ENCODE measurements at regions of chr10 and their contacts with region 1.

Region 1: GRCh38 chr10:46284293-46285229 is 2.2 kb upstream of the ANTXRL start:
- DNase-seq: peak; percentile 87
- H3K4me3 ChIP-seq: peak overlapping the region; percentile 86
- H3K27ac ChIP-seq: peak overlapping the region; percentile 71
- H3K4me1 ChIP-seq: peaks cover 24% of the 10 kb centered on the region
- H3K27me3 ChIP-seq: peaks cover 6% of the 10 kb centered on the region
- CTCF ChIP-seq: no peak

Region 2: DNA sequence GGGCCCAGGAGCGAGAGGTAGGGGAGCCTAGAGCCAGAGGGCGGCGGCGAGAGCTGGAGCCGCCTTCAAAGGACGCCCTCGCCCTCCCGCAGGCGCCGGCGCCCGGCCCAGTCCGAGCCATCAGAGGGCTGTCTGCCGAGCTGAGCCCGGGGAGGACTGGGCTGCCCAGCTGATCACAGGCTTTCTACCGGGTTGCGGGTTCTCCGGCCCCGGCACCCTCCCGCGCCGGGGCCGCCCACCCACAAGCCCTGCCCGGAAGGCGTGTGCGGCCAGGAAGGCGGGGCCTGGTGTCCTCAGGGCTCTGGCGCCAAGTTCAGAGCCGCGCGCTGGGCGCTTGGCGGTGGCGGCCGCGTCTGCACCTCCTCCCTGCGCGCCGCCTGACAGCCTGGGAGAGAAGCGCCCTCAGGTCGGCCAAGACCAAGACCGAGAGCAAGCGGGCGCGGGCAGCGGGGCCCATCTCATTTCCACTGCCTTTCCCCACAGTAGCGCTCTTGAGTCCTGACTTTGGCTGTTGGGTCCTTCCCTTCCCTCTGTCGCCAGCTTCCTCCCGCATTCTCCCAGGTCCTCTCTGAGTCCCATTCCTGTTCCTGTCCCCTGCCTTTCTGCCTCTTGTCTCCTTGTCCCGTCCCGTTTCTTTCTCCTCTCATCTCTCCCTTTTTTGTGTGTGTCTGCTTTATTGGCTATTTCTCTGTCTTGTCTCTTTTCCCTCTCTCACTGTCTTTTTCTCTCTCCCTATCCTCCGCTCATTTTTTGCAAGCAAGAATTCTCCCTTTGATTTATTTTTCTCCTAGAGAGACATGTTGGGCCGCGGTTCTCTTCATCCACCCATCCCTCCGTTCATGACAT is 177.9 kb before region 1 on chr10:
- intact Hi-C with region 1: loop called (anchors 5 kb)
- DNase-seq: peak; percentile 73
- H3K4me3 ChIP-seq: peak overlapping the region; percentile 73
- H3K27ac ChIP-seq: peak overlapping the region; percentile 46
- H3K4me1 ChIP-seq: peaks cover 10% of the 10 kb centered on the region
- H3K27me3 ChIP-seq: peaks cover 4% of the 10 kb centered on the region
- CTCF ChIP-seq: peak; percentile 44

Region 3: DNA sequence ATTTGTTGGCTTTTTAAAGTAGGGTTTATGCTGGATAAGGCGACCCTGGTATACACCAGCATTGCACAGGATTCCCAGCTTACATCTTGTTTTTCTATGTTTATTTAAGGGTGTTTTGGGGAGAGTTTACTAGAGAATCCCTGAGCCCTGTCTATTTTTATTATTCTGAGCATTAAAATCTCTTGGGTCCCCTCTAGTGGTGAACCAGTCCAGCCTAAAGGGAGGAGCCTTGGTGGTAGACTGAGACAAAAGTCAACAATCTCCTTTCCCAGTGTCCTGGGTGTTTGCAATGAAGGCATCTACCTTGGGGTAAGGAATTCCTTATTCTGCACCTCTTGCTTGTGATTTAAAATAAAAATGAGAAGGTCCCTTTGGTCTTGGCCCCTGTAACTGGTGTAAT is 40.5 kb after region 1 on chr10:
- intact Hi-C with region 1: no loop called
- DNase-seq: no peak
- H3K4me3 ChIP-seq: no peak overlapping the region
- H3K27ac ChIP-seq: no peak overlapping the region
- H3K4me1 ChIP-seq: no peaks in the 10 kb centered on the region
- H3K27me3 ChIP-seq: peaks cover 6% of the 10 kb centered on the region
- CTCF ChIP-seq: peak; percentile 65

Measured in left ventricle myocardium inferior (tissue), 1 donor.